ENCODE measurements at regions of chr2 and their contacts with region 1.

Region 1: GRCh38 chr2:75548036-75548573 is 12.6 kb downstream of the EVA1A start:
- DNase-seq: peak; percentile 35

Region 2: DNA sequence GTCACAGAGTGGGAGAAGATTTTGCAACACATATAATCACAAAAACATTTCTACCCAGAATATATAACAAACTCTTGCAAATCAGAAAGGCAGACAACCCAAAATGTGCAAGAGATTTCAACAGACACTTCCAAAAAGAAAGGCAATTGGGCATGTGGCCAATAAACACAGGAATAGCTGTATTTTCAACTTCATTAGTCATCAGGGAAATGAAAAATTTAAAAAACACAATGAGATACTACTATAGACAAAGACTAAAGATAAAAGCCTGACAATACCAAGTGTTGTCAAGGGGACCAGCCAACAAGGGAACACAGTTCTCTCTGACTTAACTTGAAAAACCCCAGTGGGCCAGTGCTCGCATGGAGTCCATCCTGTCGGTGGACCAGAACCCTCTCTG is 1309.2 kb before region 1 on chr2:
- in situ Hi-C with region 1: no loop called
- DNase-seq: no peak

Region 3: DNA sequence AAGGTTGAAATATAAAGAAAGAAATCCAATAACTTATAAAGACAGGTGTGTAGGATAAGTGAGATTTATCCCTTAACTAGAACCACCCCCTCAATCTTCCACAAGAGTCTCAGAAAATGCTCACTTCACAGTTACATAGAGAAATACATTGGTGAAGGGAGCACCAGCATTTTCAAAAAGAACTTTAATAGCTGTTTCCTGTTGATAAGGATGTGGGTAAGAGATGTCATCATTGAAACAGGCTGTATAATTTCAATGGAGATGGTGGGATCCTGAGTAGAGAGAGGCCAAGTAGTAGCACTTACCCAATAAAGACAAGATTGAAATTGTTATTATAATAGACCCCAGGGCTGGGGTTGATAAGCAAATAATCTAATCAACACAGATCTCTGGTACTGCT is 186.6 kb before region 1 on chr2:
- in situ Hi-C with region 1: no loop called
- DNase-seq: no peak

Region 4: GRCh38 chr2:75619956-75620740 is 72.0 kb after region 1 on chr2:
- in situ Hi-C with region 1: loop called (anchors 5 kb)
- DNase-seq: no peak

Measured in ACHN (cell line).